WTC11 (cell line): ENCODE measurements at regions of chr19 and their contacts with region 1.

Region 1: GRCh38 chr19:49718511-49718910 is 27.6 kb downstream of the CPT1C start:
- DNase-seq: no peak
- ATAC-seq: no peak
- H3K4me3 Mint-ChIP-seq: no peak overlapping the region
- H3K27ac Mint-ChIP-seq: no peak overlapping the region
- H3K4me1 Mint-ChIP-seq: peaks cover 8% of the 10 kb centered on the region
- H3K27me3 Mint-ChIP-seq: peaks cover 5% of the 10 kb centered on the region
- CTCF ChIP-seq: no peak

Region 2: GRCh38 chr19:49690656-49691242 is 27.8 kb before region 1 on chr19 and contains the start of gene CPT1C:
- CTCF ChIA-PET with region 1: interaction called, 14 read pairs
- POLR2A ChIA-PET with region 1: interaction called, 5 read pairs
- DNase-seq: peak; percentile 93
- ATAC-seq: peak; percentile 72
- H3K4me3 Mint-ChIP-seq: peak within 1 kb of the TSS; percentile 93
- H3K27ac Mint-ChIP-seq: peak within 1 kb of the TSS; percentile 96
- H3K4me1 Mint-ChIP-seq: peaks cover 37% of the 10 kb centered on the region
- H3K27me3 Mint-ChIP-seq: no peaks in the 10 kb centered on the region
- CTCF ChIP-seq: no peak
- total RNA-seq, gene CPT1C: 74.6 to 89.5 TPM (median 85.4 TPM) in 3 replicates

Region 3: DNA sequence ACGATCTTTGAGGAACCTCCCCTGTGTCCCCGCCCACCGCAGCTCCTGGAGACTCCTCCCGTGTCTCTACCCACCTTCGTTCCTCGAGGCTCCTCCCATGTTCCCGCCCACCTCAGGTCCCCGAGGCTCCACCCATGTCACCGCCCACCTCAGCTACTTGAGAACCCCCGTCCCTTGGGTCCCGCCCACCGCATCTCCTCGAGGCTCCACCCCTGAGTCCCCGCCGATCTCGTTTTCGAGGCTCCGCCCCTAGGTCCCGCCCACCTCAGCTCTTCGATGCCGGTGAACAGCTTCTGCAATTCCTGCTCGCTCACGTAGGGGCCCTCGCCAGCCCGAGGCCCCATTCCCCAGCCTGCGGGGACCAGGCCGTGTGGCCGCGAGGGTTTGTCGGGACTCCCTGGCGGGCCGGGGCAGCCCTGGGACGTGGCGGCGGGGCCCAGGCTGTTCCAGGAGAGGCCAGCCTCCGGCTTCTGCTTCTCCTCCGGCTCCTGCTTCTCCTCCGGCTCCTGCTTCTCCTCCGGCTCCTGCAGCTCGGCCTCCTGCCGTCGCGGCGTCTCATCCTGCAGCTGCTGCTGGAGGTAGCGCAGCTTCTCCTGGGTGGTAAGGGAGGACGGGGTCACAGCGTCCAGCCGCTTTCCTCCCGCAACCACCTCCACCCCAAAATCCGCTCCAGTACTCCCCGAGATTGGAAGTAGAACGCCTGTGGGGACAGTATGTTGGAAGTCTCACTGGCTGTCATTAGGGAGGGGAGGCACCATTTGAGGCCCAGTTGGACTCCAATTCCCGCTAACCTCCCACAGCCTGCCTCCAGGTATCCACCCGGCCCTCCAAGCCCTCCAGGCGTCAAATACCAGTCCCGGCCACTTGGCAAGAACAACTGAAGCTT is 27.9 kb after region 1 on chr19:
- CTCF ChIA-PET with region 1: interaction called, 11 read pairs
- POLR2A ChIA-PET with region 1: no interaction called
- DNase-seq: peak; percentile 97
- ATAC-seq: peak; percentile 87
- H3K4me3 Mint-ChIP-seq: peak overlapping the region; percentile 25
- H3K27ac Mint-ChIP-seq: no peak overlapping the region
- H3K4me1 Mint-ChIP-seq: peaks cover 6% of the 10 kb centered on the region; the same call in 1 of the 2 replicates
- H3K27me3 Mint-ChIP-seq: peaks cover 20% of the 10 kb centered on the region
- CTCF ChIP-seq: no peak

Region 4: DNA sequence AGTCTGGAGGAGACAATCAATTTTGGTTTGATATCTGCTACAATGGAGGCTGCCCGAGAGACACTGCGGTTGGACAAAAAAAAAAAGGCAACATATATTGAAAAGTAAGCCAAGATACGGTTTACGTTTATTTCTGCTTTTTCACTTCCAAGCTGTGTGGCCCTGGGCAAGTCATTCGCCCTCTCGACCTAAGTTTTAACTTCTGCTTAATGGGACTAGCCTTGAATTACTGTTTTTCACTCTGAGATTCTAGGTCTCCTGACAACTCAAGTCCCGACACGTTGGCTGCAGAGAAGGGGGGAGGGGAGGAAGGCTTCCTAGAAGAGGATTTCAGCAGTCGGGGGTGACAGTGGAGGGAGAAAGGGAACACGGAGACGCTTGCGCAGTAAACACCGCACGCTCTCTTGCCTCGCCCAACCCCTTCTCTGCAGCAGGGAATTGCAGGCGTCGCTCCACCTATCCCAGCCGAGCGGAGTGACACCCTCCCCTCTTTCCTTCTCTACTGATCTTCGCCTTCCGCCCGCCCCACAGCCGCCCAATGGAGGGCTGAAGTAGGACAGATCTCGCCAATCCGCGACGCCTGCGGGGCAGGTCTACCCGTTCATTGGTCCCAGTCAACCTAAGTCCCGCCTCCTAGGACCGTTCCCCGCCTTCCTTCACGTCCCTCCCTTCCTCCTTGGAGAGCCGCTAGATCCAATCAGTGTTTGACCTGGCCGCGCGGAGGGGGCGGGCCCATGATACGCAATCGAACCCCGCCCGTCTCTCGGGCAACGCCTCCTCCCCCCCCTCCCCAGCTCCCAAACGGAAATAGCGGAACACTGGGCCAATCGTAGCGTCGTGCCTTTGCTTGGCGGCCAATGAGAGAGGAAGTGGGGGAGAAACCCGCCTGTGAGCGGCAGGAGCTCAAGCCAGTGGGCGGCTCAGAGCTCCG is 47.8 kb after region 1 on chr19:
- CTCF ChIA-PET with region 1: interaction called, 16 read pairs
- POLR2A ChIA-PET with region 1: interaction called, 5 read pairs
- DNase-seq: peak; percentile 99
- ATAC-seq: peak; percentile 89
- H3K4me3 Mint-ChIP-seq: peak overlapping the region; percentile 81
- H3K27ac Mint-ChIP-seq: peak overlapping the region; percentile 100
- H3K4me1 Mint-ChIP-seq: peaks cover 21% of the 10 kb centered on the region
- H3K27me3 Mint-ChIP-seq: no peaks in the 10 kb centered on the region; the same call in 1 of the 2 replicates
- CTCF ChIP-seq: no peak

Region 5: DNA sequence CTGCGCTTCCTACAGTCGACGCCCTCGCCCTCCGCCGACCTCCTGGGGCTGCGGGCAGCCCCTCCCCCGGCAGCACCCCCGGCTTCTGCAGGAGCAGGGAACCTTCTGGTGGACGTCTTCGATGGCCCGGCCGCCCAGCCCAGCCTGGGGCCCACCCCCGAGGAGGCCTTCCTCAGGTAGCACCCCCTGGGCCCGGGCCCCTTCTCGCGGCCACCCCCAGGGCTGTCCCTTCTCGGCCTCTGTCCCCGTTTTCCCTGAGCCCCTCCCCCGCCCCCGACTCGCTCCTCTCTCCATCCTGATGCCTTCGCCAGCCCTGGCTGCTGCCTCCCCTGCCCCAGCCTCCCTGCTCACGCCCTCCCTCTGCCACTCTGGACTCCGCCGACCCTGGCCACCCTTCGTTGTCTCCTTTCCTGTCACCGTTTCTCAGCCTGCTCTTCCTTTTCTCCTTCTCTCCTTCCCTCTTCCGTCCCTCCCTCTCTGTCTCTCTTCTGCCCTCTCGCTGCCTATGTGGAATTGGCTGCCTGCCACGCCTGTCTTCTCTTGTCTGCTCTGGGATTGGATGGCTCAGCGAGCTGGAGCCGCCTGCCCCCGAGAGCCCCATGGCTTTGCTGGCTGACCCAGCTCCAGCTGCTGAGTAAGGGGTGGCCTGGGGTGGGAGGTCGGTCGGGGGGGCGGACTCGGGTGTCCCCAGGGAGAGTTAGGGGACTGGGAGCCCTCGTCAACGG is 83.6 kb after region 1 on chr19:
- CTCF ChIA-PET with region 1: interaction called, 13 read pairs
- POLR2A ChIA-PET with region 1: interaction called, 4 read pairs
- DNase-seq: peak; percentile 83
- ATAC-seq: peak; percentile 83
- H3K4me3 Mint-ChIP-seq: peak overlapping the region; percentile 65
- H3K27ac Mint-ChIP-seq: peak overlapping the region; percentile 80
- H3K4me1 Mint-ChIP-seq: peaks cover 19% of the 10 kb centered on the region
- H3K27me3 Mint-ChIP-seq: no peaks in the 10 kb centered on the region
- CTCF ChIP-seq: no peak

Region 6: DNA sequence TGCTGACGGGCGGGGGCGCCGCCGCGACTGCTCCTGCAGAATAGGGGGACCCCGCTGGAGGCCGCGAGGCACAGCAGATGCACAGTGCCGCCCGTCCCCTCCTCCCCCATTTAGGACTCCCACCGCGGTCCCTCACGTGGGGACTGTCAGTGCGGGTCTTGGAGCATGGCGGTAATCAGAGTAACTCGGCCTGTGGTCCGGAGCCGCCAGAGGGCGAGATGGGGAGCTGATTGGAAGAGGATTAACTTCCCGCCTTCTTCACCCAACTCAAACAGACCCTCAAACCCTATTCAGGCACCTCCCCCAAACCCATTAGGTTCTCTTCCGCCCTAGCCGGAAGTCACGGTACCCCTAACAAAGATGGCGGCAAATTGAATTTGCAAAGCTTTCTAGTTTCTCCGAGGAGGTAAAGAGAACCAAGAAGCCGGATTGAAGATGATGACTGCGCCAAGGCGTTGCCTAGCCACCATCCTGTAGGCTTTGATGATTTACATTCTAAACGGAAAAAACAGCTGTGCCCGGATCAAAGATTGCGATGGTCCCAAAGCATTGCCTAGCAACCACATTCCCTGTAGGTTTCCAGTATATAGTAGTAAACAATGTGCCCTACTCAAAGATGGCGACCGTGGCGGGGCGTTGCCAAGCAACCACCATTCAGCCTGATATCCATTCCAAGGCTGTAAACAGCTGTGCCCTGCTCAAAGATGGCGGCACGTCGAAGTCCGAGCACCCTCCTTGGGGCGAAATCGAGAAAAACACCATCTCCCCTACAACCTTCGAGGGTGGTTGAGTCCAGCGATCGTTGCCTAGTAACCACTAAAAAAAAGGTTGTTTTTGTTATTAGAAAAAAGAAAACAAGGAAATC is 94.7 kb after region 1 on chr19 and contains the start of gene FUZ:
- CTCF ChIA-PET with region 1: interaction called, 13 read pairs
- POLR2A ChIA-PET with region 1: interaction called, 3 read pairs
- DNase-seq: peak; percentile 98
- ATAC-seq: peak; percentile 63
- H3K4me3 Mint-ChIP-seq: peak within 1 kb of the TSS; percentile 90
- H3K27ac Mint-ChIP-seq: peak within 1 kb of the TSS; percentile 98
- H3K4me1 Mint-ChIP-seq: peaks cover 26% of the 10 kb centered on the region
- H3K27me3 Mint-ChIP-seq: peaks cover 5% of the 10 kb centered on the region; the same call in 1 of the 2 replicates
- CTCF ChIP-seq: no peak
- total RNA-seq, gene FUZ: 35.1 to 36.3 TPM (median 35.7 TPM) in 3 replicates

Region 7: DNA sequence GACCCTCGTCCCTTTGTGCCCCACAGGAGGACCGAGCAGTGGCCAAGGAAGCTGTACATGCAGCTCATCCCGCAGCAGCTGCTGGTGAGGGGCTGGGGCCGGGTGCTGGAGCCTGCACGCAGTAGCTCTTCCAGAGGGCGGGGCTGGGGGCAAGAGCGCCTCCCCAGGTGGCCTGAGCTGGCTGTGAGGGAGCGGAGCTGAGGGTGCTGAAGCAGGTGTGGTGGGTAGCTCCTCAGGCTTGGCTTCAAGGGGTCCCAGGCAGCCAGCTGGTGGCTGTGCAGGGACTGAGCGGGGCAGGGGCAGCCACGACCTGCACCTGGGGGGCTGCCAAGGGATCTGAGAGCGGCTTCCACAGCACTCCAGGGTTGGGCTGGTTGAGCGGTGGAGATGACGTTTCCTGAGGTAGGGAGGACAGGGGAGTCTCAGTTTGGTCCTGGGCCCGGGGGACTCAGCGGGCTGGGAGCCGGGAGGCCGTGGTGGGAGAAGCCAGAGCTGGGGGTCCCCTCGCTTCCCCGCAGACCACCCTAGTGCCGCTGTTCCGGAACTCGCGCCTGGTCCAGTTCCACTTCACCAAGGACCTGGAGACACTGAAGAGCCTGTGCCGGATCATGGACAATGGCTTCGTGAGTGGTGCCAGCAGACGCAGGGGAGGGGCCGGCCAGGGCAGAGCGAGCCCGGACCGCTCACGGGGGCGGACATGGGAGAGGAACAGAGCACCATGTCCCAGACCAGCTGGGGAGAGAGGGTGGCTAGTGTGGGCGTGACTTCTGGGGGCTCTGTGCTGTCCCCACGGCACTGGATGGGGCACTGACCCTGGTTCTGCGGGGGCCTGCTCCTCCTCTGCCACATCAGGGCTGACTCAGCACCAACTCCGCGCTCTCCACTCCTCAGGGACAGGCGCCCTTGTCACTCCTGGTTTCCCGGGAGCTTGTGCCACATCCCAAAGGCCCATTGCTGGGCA is 139.8 kb after region 1 on chr19:
- CTCF ChIA-PET with region 1: no interaction called
- POLR2A ChIA-PET with region 1: no interaction called
- DNase-seq: no peak
- ATAC-seq: no peak
- H3K4me3 Mint-ChIP-seq: no peak overlapping the region
- H3K27ac Mint-ChIP-seq: no peak overlapping the region
- H3K4me1 Mint-ChIP-seq: peaks cover 13% of the 10 kb centered on the region
- H3K27me3 Mint-ChIP-seq: no peaks in the 10 kb centered on the region; the same call in 1 of the 2 replicates
- CTCF ChIP-seq: no peak

Region 8: GRCh38 chr19:49869441-49870176 is 151.1 kb after region 1 on chr19:
- CTCF ChIA-PET with region 1: interaction called, 10 read pairs
- POLR2A ChIA-PET with region 1: no interaction called
- DNase-seq: peak; percentile 97
- ATAC-seq: peak; percentile 82
- H3K4me3 Mint-ChIP-seq: no peak overlapping the region
- H3K27ac Mint-ChIP-seq: peak overlapping the region; percentile 96; the same call in 1 of the 2 replicates
- H3K4me1 Mint-ChIP-seq: peaks cover 25% of the 10 kb centered on the region
- H3K27me3 Mint-ChIP-seq: no peaks in the 10 kb centered on the region
- CTCF ChIP-seq: no peak